Heart left ventricle (tissue), 16 donors: ENCODE measurements at regions of chr6 and their contacts with region 1.

Region 1: GRCh38 chr6:1604158-1605030 is 5.3 kb upstream of the FOXC1 start:
- DNase-seq: peak in 4 of 5 donors; percentile 67 to 89 (median 75)
- ATAC-seq: peak; percentile 73 to 95 (median 88)
- H3K4me3 ChIP-seq: peak overlapping the region; percentile 12 to 66 (median 54)
- H3K27ac ChIP-seq: no peak overlapping the region
- H3K4me1 ChIP-seq: peaks cover 0 to 35% (median 13%) of the 10 kb centered on the region in 12 donors
- H3K27me3 ChIP-seq: peaks cover 33 to 94% (median 70%) of the 10 kb centered on the region in 9 donors
- CTCF ChIP-seq: peak; percentile 88 to 100 (median 98)
- POLR2A ChIP-seq: no peak

Region 2: DNA sequence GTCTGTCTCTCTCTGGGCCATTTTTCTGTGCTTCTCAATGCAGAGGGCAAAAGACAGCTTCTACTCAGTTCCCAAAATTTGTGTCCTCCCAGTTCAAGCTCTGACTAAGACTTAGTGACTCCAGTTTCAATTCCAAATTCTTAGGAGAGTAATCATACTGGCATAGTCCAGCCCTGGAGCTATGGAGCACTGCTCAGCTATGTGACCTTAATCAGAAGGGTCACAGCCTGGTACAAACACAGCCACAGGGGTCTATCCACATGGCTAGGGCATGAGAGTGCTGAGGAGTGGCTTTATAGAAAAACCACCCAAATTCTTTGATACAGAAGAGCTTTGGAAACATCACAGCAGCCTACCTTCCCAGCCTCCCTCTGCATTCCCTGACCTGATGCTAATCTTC is 123.1 kb before region 1 on chr6:
- intact Hi-C with region 1: no loop called
- DNase-seq: no peak
- ATAC-seq: no peak
- H3K4me3 ChIP-seq: no peak overlapping the region
- H3K27ac ChIP-seq: no peak overlapping the region
- H3K4me1 ChIP-seq: peaks cover 0 to 10% (median 0%) of the 10 kb centered on the region in 12 donors
- H3K27me3 ChIP-seq: no peaks in the 10 kb centered on the region
- CTCF ChIP-seq: no peak
- POLR2A ChIP-seq: no peak

Region 3: GRCh38 chr6:2103644-2104523 is 499.5 kb after region 1 on chr6:
- intact Hi-C with region 1: loop called (anchors 1 to 5 kb)
- DNase-seq: no peak
- ATAC-seq: peak; percentile 61 to 81 (median 76)
- H3K4me3 ChIP-seq: peak overlapping the region in 6 of 12 donors; percentile 2 to 38 (median 15)
- H3K27ac ChIP-seq: peak overlapping the region in 1 of 12 donors; percentile 12
- H3K4me1 ChIP-seq: peaks cover 0 to 12% (median 1%) of the 10 kb centered on the region in 12 donors
- H3K27me3 ChIP-seq: no peaks in the 10 kb centered on the region
- CTCF ChIP-seq: peak; percentile 35 to 73 (median 60)
- POLR2A ChIP-seq: no peak

Region 4: GRCh38 chr6:2196079-2196679 is 591.8 kb after region 1 on chr6:
- intact Hi-C with region 1: loop called in 6 of 10 experiments (anchors 1 to 2 kb)
- DNase-seq: peak in 1 of 5 donors; percentile 16
- ATAC-seq: peak in 3 of 4 donors; percentile 74 to 80 (median 77)
- H3K4me3 ChIP-seq: no peak overlapping the region
- H3K27ac ChIP-seq: no peak overlapping the region
- H3K4me1 ChIP-seq: peaks cover 0 to 21% (median 7%) of the 10 kb centered on the region in 12 donors
- H3K27me3 ChIP-seq: no peaks in the 10 kb centered on the region
- CTCF ChIP-seq: peak; percentile 69 to 90 (median 78)
- POLR2A ChIP-seq: no peak

Region 5: DNA sequence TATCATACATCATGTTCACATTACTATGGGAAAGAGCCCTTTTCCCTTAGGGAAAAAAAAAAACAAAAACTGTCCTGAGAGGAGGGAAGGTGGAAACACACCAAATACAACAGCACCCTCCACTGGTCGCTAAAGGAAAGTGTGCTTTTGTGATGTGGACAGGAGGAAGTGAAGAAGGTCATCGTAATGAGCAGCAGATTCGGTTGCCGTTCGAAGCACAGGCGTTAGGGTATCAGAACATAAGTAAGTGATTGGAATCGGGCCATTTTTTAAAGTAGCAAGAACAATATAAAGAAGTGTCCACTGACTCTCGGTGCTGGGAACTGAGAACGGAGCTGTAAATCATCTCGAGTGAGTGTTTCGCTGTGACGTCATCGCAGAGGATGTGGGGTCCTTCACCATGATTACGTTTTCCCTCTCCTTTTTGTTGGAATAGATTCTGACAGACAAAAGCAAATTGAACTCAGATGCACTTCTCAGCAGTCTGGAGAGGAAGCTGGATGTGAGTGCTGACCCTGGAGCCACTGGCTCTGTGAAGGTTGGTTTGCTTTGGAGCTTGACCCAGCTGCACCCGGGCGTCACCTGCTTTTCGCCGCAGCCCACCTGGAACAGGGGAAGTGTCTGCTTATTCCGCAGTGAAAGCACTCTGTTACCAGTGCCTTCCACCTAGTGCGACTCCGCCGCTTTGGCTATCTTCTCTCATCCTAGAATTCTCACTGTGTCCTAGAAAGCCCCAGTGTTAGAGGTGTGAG is 844.6 kb after region 1 on chr6:
- intact Hi-C with region 1: loop called in 7 of 10 experiments (anchors 5 to 10 kb)
- DNase-seq: peak in 1 of 5 donors; percentile 30
- ATAC-seq: peak in 3 of 4 donors; percentile 69 to 73 (median 70)
- H3K4me3 ChIP-seq: peak overlapping the region in 1 of 12 donors; percentile 33
- H3K27ac ChIP-seq: no peak overlapping the region
- H3K4me1 ChIP-seq: peaks cover 0 to 12% (median 0%) of the 10 kb centered on the region in 12 donors
- H3K27me3 ChIP-seq: no peaks in the 10 kb centered on the region
- CTCF ChIP-seq: peak; percentile 29 to 72 (median 54)
- POLR2A ChIP-seq: no peak

Region 6: GRCh38 chr6:2695454-2696095 is 1091.2 kb after region 1 on chr6:
- intact Hi-C with region 1: loop called in 9 of 10 experiments (anchors 2 to 10 kb)
- DNase-seq: no peak
- ATAC-seq: peak in 3 of 4 donors; percentile 49 to 61 (median 60)
- H3K4me3 ChIP-seq: no peak overlapping the region
- H3K27ac ChIP-seq: no peak overlapping the region
- H3K4me1 ChIP-seq: no peaks in the 10 kb centered on the region
- H3K27me3 ChIP-seq: no peaks in the 10 kb centered on the region
- CTCF ChIP-seq: peak in 11 of 12 donors; percentile 9 to 63 (median 44)
- POLR2A ChIP-seq: no peak